Breast epithelium (tissue), 4 donors: ENCODE measurements at regions of chr6 and their contacts with region 1.

Region 1: GRCh38 chr6:7750197-7750596 is 24.3 kb downstream of the BMP6 start:
- DNase-seq: no peak
- H3K4me3 ChIP-seq: no peak overlapping the region
- H3K27ac ChIP-seq: no peak overlapping the region
- H3K4me1 ChIP-seq: no peaks in the 10 kb centered on the region
- H3K27me3 ChIP-seq: no peaks in the 10 kb centered on the region
- CTCF ChIP-seq: no peak
- POLR2A ChIP-seq: no peak

Region 2: DNA sequence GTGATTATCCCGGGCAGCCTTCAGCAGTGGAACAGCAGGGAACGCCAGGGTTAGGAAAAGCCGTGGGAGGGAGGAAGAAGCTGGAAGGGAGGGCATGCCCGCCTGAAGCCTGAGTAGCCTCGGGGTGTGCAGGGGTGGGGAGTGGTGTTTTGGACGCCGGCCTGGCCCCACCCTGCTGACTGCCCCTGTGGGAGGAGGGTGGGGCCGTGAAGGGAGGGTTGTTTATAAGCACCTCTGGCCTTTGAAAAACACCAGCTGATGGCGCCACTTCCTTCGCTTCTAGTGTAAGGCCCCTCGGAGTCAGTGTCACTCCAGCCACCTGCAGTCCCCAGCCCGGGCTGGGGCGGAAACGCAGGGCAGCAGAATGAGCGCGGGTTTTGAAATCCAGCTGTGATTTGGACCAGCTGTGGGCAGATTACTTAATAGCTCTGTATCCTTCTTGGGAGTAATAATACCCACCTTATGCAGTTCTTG is 77.1 kb before region 1 on chr6:
- intact Hi-C with region 1: no loop called
- DNase-seq: peak in 1 of 2 donors; percentile 20
- H3K4me3 ChIP-seq: peak overlapping the region; percentile 24 to 63 (median 40)
- H3K27ac ChIP-seq: peak overlapping the region in 1 of 2 donors; percentile 64
- H3K4me1 ChIP-seq: peaks cover 0 to 3% of the 10 kb centered on the region in 2 donors
- H3K27me3 ChIP-seq: no peaks in the 10 kb centered on the region
- CTCF ChIP-seq: no peak
- POLR2A ChIP-seq: no peak

Region 3: DNA sequence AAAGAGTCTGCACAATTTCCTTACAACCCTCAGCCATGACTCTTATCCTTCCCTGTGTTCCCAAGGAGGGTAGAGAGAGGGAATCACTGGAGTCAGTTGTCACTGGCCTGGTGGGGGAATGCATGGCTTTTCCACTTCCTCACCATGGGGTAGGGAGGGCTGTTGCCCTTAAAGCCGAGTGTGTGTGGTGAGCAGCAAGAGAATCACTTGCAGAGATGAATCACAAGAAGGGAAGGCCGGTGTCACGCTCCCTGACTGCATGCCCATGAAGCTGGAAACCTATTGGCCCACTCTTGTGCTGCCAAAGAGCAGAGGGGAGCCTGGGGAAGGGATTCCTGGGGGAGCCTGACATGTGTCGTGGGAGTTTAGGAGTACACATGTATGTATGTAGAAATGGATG is 42.4 kb before region 1 on chr6:
- intact Hi-C with region 1: no loop called
- DNase-seq: no peak
- H3K4me3 ChIP-seq: no peak overlapping the region
- H3K27ac ChIP-seq: no peak overlapping the region
- H3K4me1 ChIP-seq: no peaks in the 10 kb centered on the region
- H3K27me3 ChIP-seq: no peaks in the 10 kb centered on the region
- CTCF ChIP-seq: no peak
- POLR2A ChIP-seq: no peak

Region 4: DNA sequence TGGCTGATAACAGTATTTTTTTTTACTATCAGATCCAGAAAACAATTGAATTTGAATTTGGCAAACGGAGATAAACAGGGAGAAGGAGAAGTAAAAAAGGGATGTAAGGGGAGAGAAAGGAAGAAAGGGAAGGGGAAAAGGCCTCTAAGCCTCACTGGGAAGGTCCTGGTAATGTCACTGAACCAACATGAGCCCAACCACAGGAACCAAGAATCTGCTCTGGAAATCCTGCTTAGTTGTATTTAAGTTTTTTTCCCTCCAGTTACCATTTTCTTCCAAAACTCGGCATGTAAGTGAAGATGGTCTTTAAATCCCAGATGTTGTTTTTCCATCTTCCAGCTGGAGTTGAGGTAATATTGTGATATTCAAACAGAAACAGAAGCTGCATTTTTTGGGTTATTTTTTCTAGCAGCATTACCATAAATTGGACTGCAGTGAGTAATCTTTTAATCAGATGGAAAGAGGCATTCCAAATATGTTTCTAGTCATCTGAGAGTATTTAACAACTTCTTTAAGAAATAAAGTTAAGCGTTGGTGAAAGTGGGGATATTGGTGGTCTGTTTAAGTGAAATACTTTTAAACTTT is 69.3 kb after region 1 on chr6:
- intact Hi-C with region 1: loop called (anchors 5 kb)
- DNase-seq: no peak
- H3K4me3 ChIP-seq: no peak overlapping the region
- H3K27ac ChIP-seq: no peak overlapping the region
- H3K4me1 ChIP-seq: no peaks in the 10 kb centered on the region
- H3K27me3 ChIP-seq: no peaks in the 10 kb centered on the region
- CTCF ChIP-seq: no peak
- POLR2A ChIP-seq: no peak